ENCODE measurements at regions of chr1 and their contacts with region 1.

Region 1: DNA sequence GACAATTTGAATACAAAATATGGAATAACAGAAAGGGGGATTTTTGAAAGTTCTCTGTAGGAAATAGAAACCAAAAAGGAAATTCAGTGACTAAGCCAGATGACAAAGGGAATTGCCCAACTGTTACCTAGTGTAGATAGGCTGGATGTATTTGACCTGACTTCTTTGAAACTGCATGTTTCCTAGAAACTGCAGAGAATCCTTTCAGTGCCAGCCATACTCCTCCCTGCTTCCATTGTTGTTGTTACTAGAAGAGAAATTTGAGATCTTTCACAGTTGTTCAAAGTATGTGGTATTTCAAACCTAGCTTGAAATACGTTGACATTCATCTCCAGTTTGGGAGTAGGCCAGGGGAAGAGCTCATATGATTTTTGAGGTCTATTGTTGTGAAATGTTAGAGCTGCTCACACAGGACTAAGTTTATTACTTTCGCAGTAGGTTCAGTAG is 1.8 kb upstream of the GBP5 start:
- DNase-seq: peak; percentile 31
- H3K4me3 Mint-ChIP-seq: peak overlapping the region; percentile 76
- H3K27ac Mint-ChIP-seq: peak overlapping the region; percentile 98
- H3K4me1 Mint-ChIP-seq: peaks cover 69% of the 10 kb centered on the region
- H3K27me3 Mint-ChIP-seq: no peaks in the 10 kb centered on the region

Region 2: GRCh38 chr1:88998716-88999115 is 275.7 kb before region 1 on chr1:
- CTCF ChIA-PET with region 1: interaction called, 28 read pairs
- DNase-seq: peak; percentile 35
- H3K4me3 Mint-ChIP-seq: no peak overlapping the region
- H3K27ac Mint-ChIP-seq: no peak overlapping the region
- H3K4me1 Mint-ChIP-seq: peaks cover 36% of the 10 kb centered on the region
- H3K27me3 Mint-ChIP-seq: no peaks in the 10 kb centered on the region

Region 3: GRCh38 chr1:89085781-89086180 is 188.7 kb before region 1 on chr1:
- CTCF ChIA-PET with region 1: interaction called, 12 read pairs
- DNase-seq: peak; percentile 59
- H3K4me3 Mint-ChIP-seq: no peak overlapping the region
- H3K27ac Mint-ChIP-seq: no peak overlapping the region
- H3K4me1 Mint-ChIP-seq: peaks cover 2% of the 10 kb centered on the region
- H3K27me3 Mint-ChIP-seq: no peaks in the 10 kb centered on the region

Region 4: DNA sequence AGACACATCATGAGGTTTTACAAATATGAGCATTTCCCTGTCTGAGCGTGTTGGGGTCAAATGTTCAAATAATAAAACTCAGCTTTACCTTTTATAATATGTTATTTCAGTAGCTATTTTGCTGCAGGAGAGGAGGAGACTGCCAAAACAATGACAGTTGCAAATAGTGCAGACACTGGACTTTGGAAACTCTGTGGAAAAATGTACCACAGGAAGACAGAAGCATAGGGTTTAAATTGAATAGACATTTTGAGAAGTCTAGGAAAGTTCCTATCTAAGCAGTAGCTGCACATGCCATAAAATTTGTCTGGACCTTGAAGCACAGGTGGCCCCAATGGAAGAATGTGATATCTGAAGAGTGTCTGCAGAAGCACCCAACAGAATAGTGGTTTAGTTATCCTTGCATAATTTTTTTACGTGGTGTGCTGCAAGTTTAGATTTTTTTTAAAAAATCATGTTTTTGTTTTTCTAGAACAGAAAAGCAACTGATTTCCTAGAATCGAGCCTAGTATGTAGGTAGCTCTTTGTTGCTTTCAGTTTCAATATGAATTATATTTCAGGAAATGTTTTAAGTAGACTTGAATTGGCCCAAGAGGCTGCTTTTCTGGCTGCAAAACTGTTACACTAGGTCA is 12.2 kb after region 1 on chr1:
- CTCF ChIA-PET with region 1: interaction called, 25 read pairs
- DNase-seq: peak; percentile 41
- H3K4me3 Mint-ChIP-seq: peak overlapping the region; percentile 28
- H3K27ac Mint-ChIP-seq: peak overlapping the region; percentile 96
- H3K4me1 Mint-ChIP-seq: peaks cover 82% of the 10 kb centered on the region
- H3K27me3 Mint-ChIP-seq: no peaks in the 10 kb centered on the region

Measured in activated naive CD4-positive, alpha-beta T cell treated with anti-CD3 and anti-CD28 coated beads, Interleukin-2, amount 10 ng/mL, durations not matched to agents 7 days and 5 days (primary cell).